ENCODE measurements at regions of chr22 and their contacts with region 1.

Region 1: DNA sequence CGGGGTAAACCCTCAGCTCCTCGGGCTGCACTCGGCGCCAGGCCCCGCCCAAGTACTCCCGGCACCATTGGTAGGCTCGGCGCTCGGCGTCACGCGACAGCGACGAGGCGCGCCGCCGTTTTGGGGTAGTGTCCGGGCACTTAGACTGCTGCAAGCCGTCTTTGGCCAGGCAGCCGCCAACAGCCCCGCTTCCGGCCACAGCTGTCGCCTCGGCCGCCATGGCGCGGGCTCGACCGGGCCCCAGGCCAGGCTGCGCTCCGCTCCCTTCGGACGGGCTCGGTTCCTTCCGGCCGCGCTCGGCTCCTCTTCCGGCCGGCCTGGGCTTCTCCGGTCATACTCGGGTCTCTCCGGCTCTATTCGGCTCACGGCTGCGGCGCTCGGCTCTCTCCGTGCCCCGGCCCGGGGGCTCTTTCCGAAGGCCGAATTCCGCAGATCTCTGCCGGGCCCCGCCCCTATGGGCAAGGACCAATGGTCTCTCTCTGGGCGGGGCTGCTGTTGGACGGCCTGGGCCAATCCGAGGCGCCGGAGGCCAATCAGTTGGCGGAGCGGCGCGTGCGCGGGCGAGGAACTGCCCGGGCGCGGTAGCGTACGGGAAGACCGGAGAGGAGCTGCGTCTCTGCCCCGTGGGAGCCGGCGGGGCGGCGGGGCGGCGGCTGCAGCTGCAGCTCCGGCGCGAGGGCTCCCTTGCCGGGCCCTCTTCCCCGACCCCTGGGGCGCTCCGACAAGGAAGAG is at the start of gene CHKB:
- DNase-seq: peak; percentile 99
- total RNA-seq, gene CHKB: 49.4 TPM

Region 2: DNA sequence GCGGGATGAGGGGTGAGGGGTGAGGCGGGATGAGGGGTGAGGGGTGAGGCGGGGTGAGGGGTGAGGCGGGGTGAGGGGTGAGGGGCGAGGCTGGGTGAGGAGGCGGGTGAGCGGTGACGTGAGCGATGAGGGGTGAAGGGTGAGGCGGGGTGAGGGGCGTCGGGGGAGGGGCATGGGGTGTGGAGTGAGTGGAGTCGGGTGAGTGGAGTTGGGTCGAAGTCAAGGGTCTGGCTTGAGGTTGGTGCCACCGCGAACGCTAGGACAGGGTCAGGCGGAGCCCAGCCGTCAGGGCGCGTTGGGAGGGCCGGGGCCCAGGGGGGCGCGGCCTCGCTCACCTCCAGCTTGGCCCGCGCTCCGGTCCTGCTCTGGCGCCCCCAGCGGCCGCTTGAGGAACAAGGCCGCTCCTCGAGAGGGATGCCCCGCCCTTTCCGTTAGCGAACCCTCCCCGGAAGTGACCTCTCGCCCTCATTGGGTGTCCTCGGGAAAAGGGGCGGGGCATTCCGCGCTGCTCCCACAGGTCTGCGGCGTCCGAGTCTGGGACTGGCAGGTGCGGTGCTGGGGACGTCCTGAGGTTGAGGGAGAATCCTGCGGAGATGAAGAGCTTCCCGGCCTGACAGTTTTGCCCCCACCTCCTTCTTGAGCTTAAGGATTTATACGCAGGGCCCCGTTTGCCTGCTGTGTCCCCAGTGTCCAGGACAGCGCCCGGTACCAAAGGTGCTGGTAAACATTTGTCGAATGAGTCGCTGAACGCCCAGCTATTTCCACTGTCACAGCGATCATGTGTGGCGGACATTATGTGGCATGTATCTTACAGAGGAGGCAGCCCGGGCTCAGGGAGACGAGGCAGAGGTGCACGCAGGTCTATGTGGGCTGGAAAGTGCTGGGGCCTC is 20.0 kb before region 1 on chr22 and contains the start of gene SYCE3:
- intact Hi-C with region 1: loop called (anchors 1 kb)
- DNase-seq: peak; percentile 100
- total RNA-seq, gene SYCE3: not detected

Region 3: DNA sequence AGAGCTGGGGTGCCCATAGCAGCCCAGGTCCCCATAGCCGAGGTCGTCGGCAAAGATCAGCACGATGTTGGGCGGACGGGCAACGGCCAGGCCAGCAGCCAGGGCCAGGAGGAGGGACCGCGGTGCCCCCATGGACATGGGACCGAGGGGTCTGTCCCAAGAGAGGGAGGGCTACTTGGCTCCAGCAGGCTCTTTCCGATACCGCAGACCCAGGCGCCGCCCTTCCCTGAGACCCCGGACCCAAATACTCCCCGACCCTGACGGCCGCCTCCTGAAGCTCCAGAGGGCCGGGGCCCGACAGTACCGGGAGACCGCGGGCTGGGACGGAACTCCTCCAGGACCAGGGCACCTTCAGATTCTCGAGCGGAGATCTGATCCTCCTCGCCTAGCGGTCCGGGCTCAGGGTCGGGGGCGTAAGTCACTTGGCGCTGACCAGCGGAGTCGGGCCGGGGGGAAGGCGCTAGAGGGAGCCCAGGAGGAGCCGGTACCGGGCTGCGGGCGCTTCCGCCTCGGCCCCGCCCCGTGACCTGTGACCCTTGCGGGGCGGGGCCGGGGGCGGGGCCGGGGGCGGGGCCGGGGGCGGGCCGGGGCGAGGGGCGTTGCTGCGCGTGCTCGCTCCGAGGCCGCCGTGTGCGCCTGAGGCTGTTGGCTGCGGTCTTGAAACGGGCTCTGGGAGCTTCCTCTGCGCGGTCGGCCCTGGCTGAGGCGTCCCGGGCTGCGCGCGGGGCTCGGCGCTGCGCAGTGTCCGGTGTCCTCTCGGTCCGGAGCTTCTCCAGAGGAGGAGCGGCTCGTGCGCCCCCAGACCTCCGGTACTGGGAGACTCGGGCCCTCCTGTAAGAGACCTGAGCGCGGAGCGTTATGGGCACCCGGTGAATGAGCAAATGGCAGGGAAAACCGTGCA is 45.2 kb after region 1 on chr22 and contains the start of gene ARSA:
- intact Hi-C with region 1: no loop called
- DNase-seq: peak; percentile 92
- total RNA-seq, gene ARSA: 33.7 TPM

Region 4: GRCh38 chr22:50641696-50642607 is 59.2 kb after region 1 on chr22:
- intact Hi-C with region 1: no loop called
- DNase-seq: no peak

Region 5: GRCh38 chr22:50713571-50714056 is 130.9 kb after region 1 on chr22:
- intact Hi-C with region 1: no loop called
- DNase-seq: no peak